Activated naive CD4-positive, alpha-beta T cell treated with anti-CD3 and anti-CD28 coated beads for 36 hours (primary cell): ENCODE measurements at regions of chr4 and their contacts with region 1.

Region 1: DNA sequence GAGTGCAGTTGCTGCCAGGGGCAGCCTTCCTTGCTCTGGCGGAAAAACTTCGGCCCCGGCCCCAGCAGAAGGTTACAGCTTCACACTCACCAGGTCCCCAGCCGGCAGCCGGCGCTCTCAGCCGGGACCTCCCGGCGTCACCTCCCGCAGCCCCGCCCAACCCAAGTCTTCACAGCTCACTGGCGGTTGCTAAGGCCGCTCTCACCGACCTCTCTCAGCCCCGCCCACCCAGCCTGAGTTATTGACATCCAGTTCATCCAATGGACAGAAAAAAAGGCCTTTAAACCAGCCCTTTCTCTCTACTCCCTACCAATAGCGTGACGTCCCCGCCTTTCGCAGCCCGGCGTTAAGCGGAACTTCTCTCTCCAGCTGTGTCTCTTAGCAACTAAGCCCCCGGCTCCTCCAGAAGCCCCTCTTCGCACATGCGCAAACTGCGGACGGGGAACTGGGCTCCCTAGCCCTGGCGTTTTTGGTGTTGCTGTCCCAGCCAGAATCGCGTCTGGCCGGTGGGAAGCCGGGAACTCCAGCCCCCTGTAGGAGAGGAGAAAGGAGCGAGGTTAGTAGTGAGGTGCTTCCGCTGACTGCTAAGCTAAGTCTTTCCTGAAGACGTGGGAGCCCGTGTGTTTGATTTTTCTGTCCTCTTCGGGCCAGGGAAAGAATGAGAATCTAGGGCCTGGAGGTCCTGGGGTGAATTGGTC is at the start of gene BBS12:
- DNase-seq: peak; percentile 100
- H3K4me3 Mint-ChIP-seq: peak within 1 kb of the TSS; percentile 91
- H3K27ac Mint-ChIP-seq: peak within 1 kb of the TSS; percentile 83
- H3K4me1 Mint-ChIP-seq: peaks cover 17% of the 10 kb centered on the region
- H3K27me3 Mint-ChIP-seq: no peaks in the 10 kb centered on the region
- total RNA-seq, gene BBS12: 1.7 to 2.2 TPM

Region 2: DNA sequence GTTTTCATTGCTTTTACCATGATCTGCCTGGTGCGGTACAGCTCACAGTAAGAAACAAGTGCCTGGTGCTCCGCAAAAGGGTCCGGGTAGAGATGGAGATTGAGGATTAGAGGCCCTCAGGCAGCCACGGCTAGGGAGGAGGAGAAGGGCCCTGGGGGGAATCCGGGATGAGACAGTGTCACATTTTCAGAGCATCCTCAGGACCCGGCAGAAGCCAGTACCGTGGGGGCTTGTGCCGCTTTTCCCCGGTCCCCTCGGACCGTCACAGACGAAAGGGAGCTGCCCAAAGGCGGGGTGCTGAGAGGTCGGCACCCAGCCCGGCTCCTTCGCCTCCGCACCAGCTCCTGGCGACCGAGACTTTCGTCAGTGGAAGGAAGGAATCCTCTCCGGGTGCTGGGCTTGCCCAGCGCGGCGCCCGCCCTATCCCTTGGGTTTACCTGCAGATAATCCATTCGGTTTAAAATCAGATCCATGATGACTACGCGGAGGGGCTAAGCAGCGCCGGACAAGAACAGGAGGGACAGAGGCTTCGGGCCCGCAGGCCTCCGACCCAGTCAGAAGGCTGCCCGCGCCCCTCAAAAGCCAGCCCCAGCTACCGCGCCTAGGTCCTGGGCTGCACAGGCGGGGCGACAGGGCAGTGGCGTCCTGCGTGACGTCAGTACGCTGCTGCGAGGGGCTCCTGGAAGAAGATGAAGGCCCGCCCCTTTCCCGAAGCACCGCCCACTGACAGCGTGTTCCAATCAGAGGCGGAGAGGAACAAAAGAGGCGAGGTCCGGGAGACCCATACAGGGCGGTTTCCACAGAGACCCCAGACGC is 862.4 kb before region 1 on chr4 and contains the start of gene BBS7:
- CTCF ChIA-PET with region 1: interaction called, 4 read pairs
- intact Hi-C with region 1: loop called (anchors 1 kb)
- DNase-seq: peak; percentile 99
- H3K4me3 Mint-ChIP-seq: peak within 1 kb of the TSS; percentile 95
- H3K27ac Mint-ChIP-seq: peak within 1 kb of the TSS; percentile 76
- H3K4me1 Mint-ChIP-seq: peaks cover 30% of the 10 kb centered on the region
- H3K27me3 Mint-ChIP-seq: peaks cover 11% of the 10 kb centered on the region
- total RNA-seq, gene BBS7: 16.6 to 19.4 TPM

Region 3: DNA sequence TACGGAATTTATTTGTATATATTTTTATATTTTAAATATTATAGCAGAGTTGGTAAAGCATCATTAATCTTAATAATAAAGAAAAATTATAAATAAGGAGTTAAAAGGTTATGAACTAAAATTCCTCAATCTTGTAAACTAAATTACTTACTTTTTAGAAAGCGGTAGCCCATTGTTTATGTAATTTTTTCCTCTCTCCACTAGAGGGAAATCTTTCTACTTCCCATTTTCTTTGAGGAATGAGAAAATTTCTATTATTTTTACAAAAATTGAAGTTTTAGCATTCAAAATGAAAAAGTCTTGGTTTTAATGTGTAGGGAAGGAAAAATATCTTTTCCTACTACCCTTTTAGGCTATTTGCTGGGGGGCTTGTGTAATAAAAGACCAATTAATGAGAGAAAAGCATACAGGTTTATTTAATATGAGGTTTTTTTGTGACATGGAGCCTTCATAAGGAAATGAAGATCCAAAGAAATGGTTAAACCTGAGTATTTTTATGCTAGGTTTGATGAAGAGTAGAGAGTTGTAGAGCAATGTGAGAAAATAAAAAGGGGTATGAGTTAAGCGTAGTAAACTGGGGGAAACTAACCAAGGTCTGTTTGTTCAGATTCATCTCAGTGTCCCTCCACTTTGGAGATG is 422.4 kb before region 1 on chr4:
- CTCF ChIA-PET with region 1: no interaction called
- intact Hi-C with region 1: loop called (anchors 5 kb)
- DNase-seq: no peak
- H3K4me3 Mint-ChIP-seq: no peak overlapping the region
- H3K27ac Mint-ChIP-seq: peak overlapping the region; percentile 57
- H3K4me1 Mint-ChIP-seq: peaks cover 8% of the 10 kb centered on the region
- H3K27me3 Mint-ChIP-seq: no peaks in the 10 kb centered on the region

Region 4: GRCh38 chr4:122716825-122717448 is 15.5 kb before region 1 on chr4:
- CTCF ChIA-PET with region 1: interaction called, 18 read pairs
- intact Hi-C with region 1: no loop called
- DNase-seq: peak; percentile 94
- H3K4me3 Mint-ChIP-seq: no peak overlapping the region
- H3K27ac Mint-ChIP-seq: peak overlapping the region; percentile 65
- H3K4me1 Mint-ChIP-seq: peaks cover 41% of the 10 kb centered on the region
- H3K27me3 Mint-ChIP-seq: no peaks in the 10 kb centered on the region

Region 5: DNA sequence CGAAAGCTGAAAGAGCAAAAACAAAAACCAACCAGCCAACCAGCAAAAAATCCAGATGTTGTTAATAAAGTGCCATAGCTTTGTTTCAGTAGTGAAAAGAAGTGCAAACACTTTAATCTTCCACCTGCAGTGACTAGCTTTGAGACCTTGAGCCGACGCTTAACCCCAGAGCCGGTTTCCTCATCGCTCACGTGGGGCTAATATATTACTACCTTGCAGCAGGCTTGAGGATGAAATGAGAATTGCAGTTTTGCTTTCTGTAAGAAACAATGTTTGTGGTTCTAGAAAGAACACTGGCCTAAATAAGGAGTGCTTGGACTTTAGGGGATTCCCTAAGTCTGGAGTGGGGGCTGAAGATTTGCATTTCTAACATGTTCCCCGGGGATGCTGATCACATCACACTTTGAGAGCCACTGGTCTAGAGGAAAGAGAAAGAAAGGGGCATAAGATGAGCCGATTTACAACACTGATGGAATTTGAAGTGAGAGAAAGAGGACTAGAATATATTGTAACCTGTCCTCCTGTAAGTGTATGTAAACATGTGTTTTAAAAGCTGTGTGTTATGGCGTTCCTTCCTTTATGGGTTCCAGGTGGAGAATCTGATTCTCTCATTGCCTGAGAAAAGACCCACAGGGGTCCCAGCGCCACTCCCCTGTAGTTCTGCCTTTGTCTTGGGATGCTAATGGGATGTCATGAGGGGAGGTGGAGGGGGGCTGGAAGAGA is 95.6 kb after region 1 on chr4:
- CTCF ChIA-PET with region 1: no interaction called
- intact Hi-C with region 1: loop called (anchors 1 kb)
- DNase-seq: peak; percentile 71
- H3K4me3 Mint-ChIP-seq: peak overlapping the region; percentile 78
- H3K27ac Mint-ChIP-seq: peak overlapping the region; percentile 9
- H3K4me1 Mint-ChIP-seq: peaks cover 12% of the 10 kb centered on the region
- H3K27me3 Mint-ChIP-seq: peaks cover 74% of the 10 kb centered on the region

Region 6: DNA sequence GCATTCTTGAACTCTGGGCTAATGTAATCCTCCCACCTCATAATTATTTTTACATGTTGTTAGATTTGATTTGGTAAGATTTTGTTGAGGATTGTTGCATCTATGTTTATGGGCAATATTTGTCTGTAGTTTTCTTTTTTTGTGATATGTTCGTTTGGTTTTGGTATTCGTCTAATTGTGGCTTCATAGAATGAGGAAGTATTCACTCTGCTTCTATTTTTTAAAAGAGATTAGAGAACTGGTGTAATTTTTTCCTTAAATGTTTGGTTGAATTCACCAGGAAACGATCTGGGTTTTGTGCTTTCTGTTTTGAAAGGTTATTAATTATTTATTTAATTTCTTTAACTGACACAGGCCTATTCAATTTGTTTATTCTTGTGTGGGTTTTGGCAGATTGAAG is 351.2 kb after region 1 on chr4:
- CTCF ChIA-PET with region 1: no interaction called
- intact Hi-C with region 1: no loop called
- DNase-seq: no peak
- H3K4me3 Mint-ChIP-seq: no peak overlapping the region
- H3K27ac Mint-ChIP-seq: no peak overlapping the region
- H3K4me1 Mint-ChIP-seq: no peaks in the 10 kb centered on the region
- H3K27me3 Mint-ChIP-seq: no peaks in the 10 kb centered on the region